ENCODE measurements at regions of chr4 and their contacts with region 1.

Region 1: GRCh38 chr4:133647206-133647605 is 498.1 kb downstream of the PCDH10 start:
- DNase-seq: no peak
- H3K4me3 Mint-ChIP-seq: no peak overlapping the region
- H3K27ac Mint-ChIP-seq: no peak overlapping the region
- H3K4me1 Mint-ChIP-seq: no peaks in the 10 kb centered on the region
- H3K27me3 Mint-ChIP-seq: no peaks in the 10 kb centered on the region

Region 2: GRCh38 chr4:133694416-133694815 is 47.2 kb after region 1 on chr4:
- intact Hi-C with region 1: loop called (anchors 2 kb)
- DNase-seq: no peak
- H3K4me3 Mint-ChIP-seq: no peak overlapping the region
- H3K27ac Mint-ChIP-seq: no peak overlapping the region
- H3K4me1 Mint-ChIP-seq: no peaks in the 10 kb centered on the region
- H3K27me3 Mint-ChIP-seq: no peaks in the 10 kb centered on the region

Region 3: DNA sequence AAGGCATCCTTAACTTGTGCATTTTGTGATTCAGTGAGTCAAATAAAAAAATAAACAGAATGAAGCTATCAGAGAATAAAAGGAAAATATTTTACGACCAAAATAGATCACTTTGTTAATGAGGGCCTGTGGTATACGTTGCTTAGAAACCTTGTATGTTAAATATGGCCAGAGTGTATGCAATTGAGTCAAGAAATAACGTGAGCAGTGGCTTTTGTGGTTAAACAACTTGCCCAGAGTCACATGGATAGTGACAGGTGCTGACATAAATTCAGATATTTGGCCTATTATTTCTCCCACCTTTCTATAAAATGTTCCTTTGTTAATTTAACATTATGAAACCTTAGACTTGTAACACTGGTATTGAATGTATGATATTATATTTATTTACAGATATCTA is 160.9 kb after region 1 on chr4:
- intact Hi-C with region 1: no loop called
- DNase-seq: no peak
- H3K4me3 Mint-ChIP-seq: no peak overlapping the region
- H3K27ac Mint-ChIP-seq: no peak overlapping the region
- H3K4me1 Mint-ChIP-seq: no peaks in the 10 kb centered on the region
- H3K27me3 Mint-ChIP-seq: no peaks in the 10 kb centered on the region